ENCODE measurements at regions of chr17 and their contacts with region 1.

Region 1: GRCh38 chr17:1716076-1716995 is 6.2 kb upstream of the TLCD2 start:
- DNase-seq: peak; percentile 100
- ATAC-seq: peak; percentile 74
- H3K4me3 Mint-ChIP-seq: peak overlapping the region; percentile 93
- H3K27ac Mint-ChIP-seq: peak overlapping the region; percentile 99
- H3K4me1 Mint-ChIP-seq: peaks cover 24% of the 10 kb centered on the region
- H3K27me3 Mint-ChIP-seq: no peaks in the 10 kb centered on the region
- CTCF ChIP-seq: no peak

Region 2: GRCh38 chr17:1673041-1673785 is 43.1 kb before region 1 on chr17:
- CTCF ChIA-PET with region 1: interaction called, 15 read pairs
- POLR2A ChIA-PET with region 1: interaction called, 3 read pairs
- DNase-seq: no peak
- ATAC-seq: no peak
- H3K4me3 Mint-ChIP-seq: no peak overlapping the region
- H3K27ac Mint-ChIP-seq: no peak overlapping the region
- H3K4me1 Mint-ChIP-seq: no peaks in the 10 kb centered on the region
- H3K27me3 Mint-ChIP-seq: no peaks in the 10 kb centered on the region
- CTCF ChIP-seq: no peak

Region 3: DNA sequence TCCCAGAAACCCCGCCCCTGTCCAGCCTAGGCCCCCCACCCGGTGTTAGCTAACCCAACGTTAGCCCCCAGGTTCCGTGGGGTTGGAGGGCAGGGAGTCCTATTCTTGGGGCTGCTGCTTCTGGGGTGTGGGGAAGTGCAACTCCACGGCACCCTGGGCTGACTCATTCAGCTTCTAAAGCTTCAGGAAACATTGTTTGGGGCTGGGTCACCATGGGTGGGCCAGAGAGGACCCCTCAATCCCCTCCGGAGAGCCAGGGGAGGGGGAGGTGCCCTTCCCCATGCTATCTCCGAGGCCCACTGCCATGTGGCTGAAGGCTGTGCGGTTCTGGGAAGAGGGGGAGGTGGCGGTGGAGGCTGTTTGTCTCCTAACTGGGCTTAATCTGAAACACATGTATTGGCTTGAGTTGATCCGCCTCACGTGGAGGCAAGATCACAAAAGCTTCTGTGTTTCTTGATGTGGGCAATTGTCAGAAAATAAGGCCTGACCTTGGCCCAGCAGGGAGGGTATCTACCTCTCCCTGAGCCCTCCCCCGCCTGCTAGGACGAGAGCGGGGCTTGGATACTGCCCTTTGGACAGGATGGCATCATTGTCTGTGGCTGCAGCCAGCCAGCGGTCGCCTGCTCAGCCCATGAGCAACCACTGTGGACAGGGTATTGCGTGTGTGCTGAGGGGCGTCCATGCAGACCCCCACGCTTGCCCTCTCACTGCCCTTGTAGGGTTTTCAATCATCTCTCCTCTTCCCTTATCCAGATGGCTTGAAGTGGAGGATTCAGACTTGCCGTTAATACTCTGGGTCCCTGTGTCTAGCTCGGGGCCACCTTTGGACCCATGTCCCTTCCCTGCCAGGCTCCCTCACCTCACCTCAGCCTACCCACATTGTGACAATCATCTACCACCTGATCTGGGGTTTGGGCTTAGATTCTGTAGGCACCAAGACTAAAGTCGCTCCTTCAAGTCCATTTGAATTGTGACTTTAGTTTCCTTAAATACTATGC is 46.9 kb after region 1 on chr17:
- CTCF ChIA-PET with region 1: interaction called, 26 read pairs
- POLR2A ChIA-PET with region 1: interaction called, 10 read pairs
- DNase-seq: no peak
- ATAC-seq: peak; percentile 47
- H3K4me3 Mint-ChIP-seq: peak overlapping the region; percentile 10; the same call in 1 of the 2 replicates
- H3K27ac Mint-ChIP-seq: peak overlapping the region; percentile 66; the same call in 1 of the 2 replicates
- H3K4me1 Mint-ChIP-seq: peaks cover 21% of the 10 kb centered on the region
- H3K27me3 Mint-ChIP-seq: no peaks in the 10 kb centered on the region
- CTCF ChIP-seq: no peak

Region 4: GRCh38 chr17:1769822-1770477 is 53.6 kb after region 1 on chr17:
- CTCF ChIA-PET with region 1: interaction called, 26 read pairs
- POLR2A ChIA-PET with region 1: interaction called, 17 read pairs
- DNase-seq: peak; percentile 65
- ATAC-seq: peak; percentile 87
- H3K4me3 Mint-ChIP-seq: peak overlapping the region; percentile 50
- H3K27ac Mint-ChIP-seq: peak overlapping the region; percentile 93
- H3K4me1 Mint-ChIP-seq: peaks cover 15% of the 10 kb centered on the region
- H3K27me3 Mint-ChIP-seq: no peaks in the 10 kb centered on the region
- CTCF ChIP-seq: no peak

Region 5: GRCh38 chr17:1783834-1784611 is 67.7 kb after region 1 on chr17:
- CTCF ChIA-PET with region 1: interaction called, 64 read pairs
- POLR2A ChIA-PET with region 1: interaction called, 4 read pairs
- DNase-seq: no peak
- ATAC-seq: peak; percentile 86
- H3K4me3 Mint-ChIP-seq: no peak overlapping the region
- H3K27ac Mint-ChIP-seq: peak overlapping the region; percentile 69
- H3K4me1 Mint-ChIP-seq: no peaks in the 10 kb centered on the region
- H3K27me3 Mint-ChIP-seq: no peaks in the 10 kb centered on the region
- CTCF ChIP-seq: 0 out of 2 replicates have a peak, but pooled peaks have one; percentile 15

Region 6: GRCh38 chr17:1852327-1852726 is 136.0 kb after region 1 on chr17:
- CTCF ChIA-PET with region 1: no interaction called
- POLR2A ChIA-PET with region 1: no interaction called
- DNase-seq: no peak
- ATAC-seq: no peak
- H3K4me3 Mint-ChIP-seq: no peak overlapping the region
- H3K27ac Mint-ChIP-seq: no peak overlapping the region
- H3K4me1 Mint-ChIP-seq: no peaks in the 10 kb centered on the region
- H3K27me3 Mint-ChIP-seq: no peaks in the 10 kb centered on the region
- CTCF ChIP-seq: no peak

Region 7: GRCh38 chr17:1865252-1866037 is 149.1 kb after region 1 on chr17:
- CTCF ChIA-PET with region 1: interaction called, 15 read pairs
- POLR2A ChIA-PET with region 1: no interaction called
- DNase-seq: peak; percentile 37
- ATAC-seq: no peak
- H3K4me3 Mint-ChIP-seq: no peak overlapping the region
- H3K27ac Mint-ChIP-seq: no peak overlapping the region
- H3K4me1 Mint-ChIP-seq: no peaks in the 10 kb centered on the region
- H3K27me3 Mint-ChIP-seq: no peaks in the 10 kb centered on the region
- CTCF ChIP-seq: peak; percentile 46